Cardiac septum (tissue), 1 donor: ENCODE measurements at regions of chr13 and their contacts with region 1.

Region 1: GRCh38 chr13:50911937-50912795 is 2.6 kb downstream of the RNASEH2B start:
- DNase-seq: peak; percentile 92

Region 2: DNA sequence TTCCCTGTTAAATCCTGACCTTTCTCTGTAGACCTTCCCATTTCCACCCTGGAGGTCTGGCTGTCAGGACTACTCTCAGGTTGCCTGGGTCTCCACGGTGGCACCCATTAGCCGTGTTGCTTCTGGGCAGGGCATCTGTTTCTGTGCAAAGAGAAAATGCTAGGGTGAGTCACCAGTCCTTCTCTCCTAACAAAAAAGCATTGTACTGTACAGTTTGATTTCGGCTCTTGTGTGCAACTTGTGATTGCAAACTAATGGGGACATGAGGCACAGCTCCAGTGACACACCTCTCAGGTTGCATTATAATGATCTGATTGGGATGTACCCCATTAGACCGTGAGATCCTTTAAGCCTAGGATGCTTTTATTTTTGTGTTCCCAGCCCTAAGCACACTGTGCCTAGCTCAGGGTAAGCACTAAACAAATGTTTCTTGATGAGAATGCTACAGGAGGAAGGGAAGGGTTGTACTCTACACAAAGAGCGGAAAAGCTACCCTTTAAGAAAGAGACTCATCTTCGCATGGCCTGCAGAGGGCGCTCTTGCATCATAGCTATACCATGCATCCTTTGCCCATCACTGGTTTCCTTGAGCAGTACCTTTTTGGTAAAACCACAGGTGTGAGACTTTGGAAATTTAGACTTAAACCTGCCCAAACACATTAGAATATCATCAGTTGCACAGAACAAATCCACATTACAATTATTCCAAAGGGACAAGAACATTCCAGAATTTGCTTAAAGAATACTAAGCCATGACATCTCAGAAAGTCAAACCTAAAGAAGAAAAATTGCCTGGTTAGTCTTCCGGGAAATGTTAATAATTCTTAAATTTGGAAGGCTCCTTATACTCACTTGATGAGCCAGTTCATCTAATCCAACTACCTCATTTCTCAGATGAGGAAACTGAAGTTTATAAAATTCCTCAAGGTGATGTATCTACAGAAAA is 935.6 kb before region 1 on chr13:
- intact Hi-C with region 1: loop called (anchors 5 kb)
- DNase-seq: peak; percentile 79

Region 3: GRCh38 chr13:50081679-50082425 is 830.3 kb before region 1 on chr13:
- intact Hi-C with region 1: loop called (anchors 5 kb)
- DNase-seq: peak; percentile 99

Region 4: GRCh38 chr13:50123862-50124536 is 788.2 kb before region 1 on chr13:
- intact Hi-C with region 1: loop called (anchors 5 kb)
- DNase-seq: peak; percentile 95

Region 5: GRCh38 chr13:50529154-50529882 is 382.8 kb before region 1 on chr13:
- intact Hi-C with region 1: loop called (anchors 5 kb)
- DNase-seq: peak; percentile 88